Activated CD4-positive, alpha-beta memory T cell treated with anti-CD3 and anti-CD28 coated beads for 36 hours (primary cell): ENCODE measurements at regions of chr2 and their contacts with region 1.

Region 1: GRCh38 chr2:119759451-119760236 is at the start of gene PTPN4:
- DNase-seq: peak; percentile 98
- H3K4me3 Mint-ChIP-seq: peak within 1 kb of the TSS; percentile 89
- H3K27ac Mint-ChIP-seq: peak within 1 kb of the TSS; percentile 93
- H3K4me1 Mint-ChIP-seq: peaks cover 48% of the 10 kb centered on the region
- H3K27me3 Mint-ChIP-seq: no peaks in the 10 kb centered on the region
- total RNA-seq, gene PTPN4: 29.4 to 31.6 TPM

Region 2: DNA sequence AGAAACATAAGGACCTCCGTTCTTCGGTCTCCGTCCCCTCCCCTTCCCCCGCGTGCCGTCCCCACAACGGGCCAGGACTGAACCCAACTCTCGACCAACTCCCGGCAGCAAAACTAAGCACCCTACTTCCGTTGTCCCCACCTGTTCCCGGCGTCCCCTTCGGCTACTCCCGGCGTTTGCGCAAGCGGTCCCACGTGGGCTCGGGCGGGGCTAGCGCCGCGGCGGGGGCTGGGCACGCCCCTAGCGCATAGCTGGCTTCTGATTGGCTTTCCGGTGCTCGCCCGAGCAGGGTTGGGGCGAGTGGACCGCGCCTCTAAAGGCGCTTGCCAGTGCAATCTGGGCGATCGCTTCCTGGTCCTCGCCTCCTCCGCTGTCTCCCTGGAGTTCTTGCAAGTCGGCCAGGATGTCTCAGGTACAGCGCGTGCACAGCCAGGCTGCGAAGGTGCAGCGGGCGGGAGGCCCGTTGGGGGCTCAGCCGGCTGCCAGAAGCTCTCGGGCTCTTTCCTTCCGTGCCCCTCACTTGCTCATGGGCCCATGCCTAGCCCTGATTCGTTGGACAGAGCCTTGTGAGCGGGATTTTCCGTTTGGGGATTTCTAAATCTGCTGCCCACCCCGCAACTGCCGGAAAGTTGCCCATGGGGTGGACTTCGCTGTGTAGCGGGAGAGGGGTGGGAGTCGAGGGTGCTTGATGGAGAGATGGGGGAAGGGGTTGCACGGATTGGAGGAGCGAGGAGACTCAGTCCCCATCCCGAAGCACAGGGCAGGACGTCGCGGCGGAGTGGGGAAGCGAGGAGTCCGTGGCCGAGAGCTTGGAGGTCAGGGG is 392.8 kb before region 1 on chr2 and contains the starts of genes C2orf76 and DBI:
- CTCF ChIA-PET with region 1: no interaction called
- POLR2A ChIA-PET with region 1: no interaction called
- intact Hi-C with region 1: loop called (anchors 1 kb)
- DNase-seq: peak; percentile 96
- H3K4me3 Mint-ChIP-seq: peak within 1 kb of the TSS; percentile 100
- H3K27ac Mint-ChIP-seq: peak within 1 kb of the TSS; percentile 96
- H3K4me1 Mint-ChIP-seq: peaks cover 33% of the 10 kb centered on the region
- H3K27me3 Mint-ChIP-seq: no peaks in the 10 kb centered on the region
- total RNA-seq, gene C2orf76: 10.5 to 11.5 TPM
- total RNA-seq, gene DBI: 149 to 150 TPM

Region 3: GRCh38 chr2:119718501-119719260 is 41.0 kb before region 1 on chr2:
- CTCF ChIA-PET with region 1: no interaction called
- POLR2A ChIA-PET with region 1: interaction called, 3 read pairs
- intact Hi-C with region 1: loop called (anchors 5 kb)
- DNase-seq: peak; percentile 33
- H3K4me3 Mint-ChIP-seq: no peak overlapping the region
- H3K27ac Mint-ChIP-seq: peak overlapping the region; percentile 61
- H3K4me1 Mint-ChIP-seq: peaks cover 14% of the 10 kb centered on the region
- H3K27me3 Mint-ChIP-seq: no peaks in the 10 kb centered on the region

Region 4: GRCh38 chr2:119826370-119826961 is 66.8 kb after region 1 on chr2:
- CTCF ChIA-PET with region 1: interaction called, 26 read pairs
- POLR2A ChIA-PET with region 1: interaction called, 3 read pairs
- intact Hi-C with region 1: loop called (anchors 1 kb)
- DNase-seq: peak; percentile 57
- H3K4me3 Mint-ChIP-seq: no peak overlapping the region
- H3K27ac Mint-ChIP-seq: no peak overlapping the region
- H3K4me1 Mint-ChIP-seq: peaks cover 42% of the 10 kb centered on the region
- H3K27me3 Mint-ChIP-seq: no peaks in the 10 kb centered on the region

Region 5: GRCh38 chr2:120109186-120110061 is 349.8 kb after region 1 on chr2:
- CTCF ChIA-PET with region 1: no interaction called
- POLR2A ChIA-PET with region 1: no interaction called
- intact Hi-C with region 1: loop called (anchors 5 kb)
- DNase-seq: no peak
- H3K4me3 Mint-ChIP-seq: no peak overlapping the region
- H3K27ac Mint-ChIP-seq: peak overlapping the region; percentile 42
- H3K4me1 Mint-ChIP-seq: peaks cover 17% of the 10 kb centered on the region
- H3K27me3 Mint-ChIP-seq: no peaks in the 10 kb centered on the region

Region 6: GRCh38 chr2:120252225-120253021 is 492.8 kb after region 1 on chr2 and contains the start of gene RALB:
- CTCF ChIA-PET with region 1: no interaction called
- POLR2A ChIA-PET with region 1: no interaction called
- intact Hi-C with region 1: loop called (anchors 1 kb)
- DNase-seq: peak; percentile 99
- H3K4me3 Mint-ChIP-seq: peak within 1 kb of the TSS; percentile 98
- H3K27ac Mint-ChIP-seq: peak within 1 kb of the TSS; percentile 83
- H3K4me1 Mint-ChIP-seq: peaks cover 43% of the 10 kb centered on the region
- H3K27me3 Mint-ChIP-seq: peaks cover 7% of the 10 kb centered on the region
- total RNA-seq, gene RALB: 52.5 to 52.9 TPM